ENCODE measurements at regions of chr9 and their contacts with region 1.

Region 1: DNA sequence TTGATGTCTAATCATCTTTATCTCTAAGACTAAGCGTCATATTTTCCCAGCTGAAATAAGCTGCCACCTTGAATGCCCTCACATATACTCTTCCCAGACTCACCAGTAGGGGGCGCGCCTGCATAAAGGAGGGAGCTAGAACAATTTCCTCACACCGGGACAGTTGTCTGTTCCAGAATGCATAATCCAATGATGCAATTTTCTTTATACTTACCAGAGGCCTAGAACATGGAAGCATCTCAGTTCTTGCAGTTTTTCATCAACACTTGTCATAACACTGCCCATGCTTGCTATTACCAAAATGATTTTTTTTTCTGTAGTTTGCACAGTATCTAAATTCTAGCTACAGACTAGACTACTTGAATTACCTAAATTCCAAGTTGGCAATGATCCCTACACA is 203.9 kb downstream of the FRMD3 start:
- DNase-seq: peak; percentile 80
- ATAC-seq: peak; percentile 68
- H3K4me3 Mint-ChIP-seq: no peak overlapping the region
- H3K27ac Mint-ChIP-seq: no peak overlapping the region
- H3K4me1 Mint-ChIP-seq: peaks cover 9% of the 10 kb centered on the region
- H3K27me3 Mint-ChIP-seq: no peaks in the 10 kb centered on the region

Region 2: GRCh38 chr9:83296129-83296528 is 38.2 kb before region 1 on chr9:
- CTCF ChIA-PET with region 1: no interaction called
- POLR2A ChIA-PET with region 1: no interaction called
- DNase-seq: peak; percentile 26
- ATAC-seq: no peak
- H3K4me3 Mint-ChIP-seq: no peak overlapping the region
- H3K27ac Mint-ChIP-seq: no peak overlapping the region
- H3K4me1 Mint-ChIP-seq: no peaks in the 10 kb centered on the region
- H3K27me3 Mint-ChIP-seq: no peaks in the 10 kb centered on the region

Region 3: GRCh38 chr9:83346655-83347420 is 12.5 kb after region 1 on chr9:
- CTCF ChIA-PET with region 1: interaction called, 11 read pairs
- POLR2A ChIA-PET with region 1: no interaction called
- DNase-seq: no peak
- ATAC-seq: no peak
- H3K4me3 Mint-ChIP-seq: no peak overlapping the region
- H3K27ac Mint-ChIP-seq: no peak overlapping the region
- H3K4me1 Mint-ChIP-seq: no peaks in the 10 kb centered on the region
- H3K27me3 Mint-ChIP-seq: no peaks in the 10 kb centered on the region

Region 4: DNA sequence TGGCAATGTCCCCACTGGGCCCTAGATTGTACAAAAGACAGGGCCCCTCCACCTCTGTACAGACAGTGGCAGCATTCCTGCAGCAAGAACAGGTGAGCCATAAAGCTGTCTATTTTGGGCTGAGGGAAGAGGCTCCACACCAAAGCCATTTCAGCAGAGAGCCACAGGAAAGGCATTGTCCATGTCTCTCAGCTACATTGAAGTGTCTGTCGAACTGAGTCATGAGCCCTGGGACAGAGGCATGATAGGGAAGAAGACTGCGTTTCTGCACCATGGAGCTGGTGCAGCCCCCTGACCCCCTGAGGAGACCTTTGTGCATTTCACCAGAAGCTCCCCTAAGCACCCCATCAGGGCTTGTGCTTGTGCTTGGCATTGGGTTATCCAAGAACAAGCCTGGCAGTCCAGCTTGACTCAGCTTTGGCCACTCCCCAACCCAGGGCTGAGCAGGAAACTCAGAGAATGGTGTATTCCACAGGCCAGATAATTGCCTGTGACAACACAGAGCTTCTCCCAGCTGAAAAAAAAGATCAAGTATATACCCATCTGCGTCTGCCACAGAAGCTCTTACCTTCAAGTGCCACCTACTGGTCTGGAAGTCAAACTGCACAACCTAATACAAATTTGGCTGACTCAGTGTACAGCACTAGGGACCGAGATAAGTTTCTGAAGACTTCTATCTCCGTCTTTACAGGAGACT is 209.8 kb after region 1 on chr9:
- CTCF ChIA-PET with region 1: interaction called, 145 read pairs
- POLR2A ChIA-PET with region 1: no interaction called
- DNase-seq: peak; percentile 26
- ATAC-seq: peak; percentile 61
- H3K4me3 Mint-ChIP-seq: no peak overlapping the region
- H3K27ac Mint-ChIP-seq: no peak overlapping the region
- H3K4me1 Mint-ChIP-seq: no peaks in the 10 kb centered on the region
- H3K27me3 Mint-ChIP-seq: peaks cover 22% of the 10 kb centered on the region

Region 5: GRCh38 chr9:83596896-83597504 is 262.7 kb after region 1 on chr9:
- CTCF ChIA-PET with region 1: interaction called, 34 read pairs
- POLR2A ChIA-PET with region 1: no interaction called
- DNase-seq: peak; percentile 65
- ATAC-seq: peak; percentile 51
- H3K4me3 Mint-ChIP-seq: no peak overlapping the region
- H3K27ac Mint-ChIP-seq: no peak overlapping the region
- H3K4me1 Mint-ChIP-seq: no peaks in the 10 kb centered on the region
- H3K27me3 Mint-ChIP-seq: no peaks in the 10 kb centered on the region

Region 6: GRCh38 chr9:83639266-83639665 is 304.9 kb after region 1 on chr9:
- CTCF ChIA-PET with region 1: interaction called, 12 read pairs
- POLR2A ChIA-PET with region 1: no interaction called
- DNase-seq: no peak
- ATAC-seq: no peak
- H3K4me3 Mint-ChIP-seq: no peak overlapping the region
- H3K27ac Mint-ChIP-seq: no peak overlapping the region
- H3K4me1 Mint-ChIP-seq: no peaks in the 10 kb centered on the region
- H3K27me3 Mint-ChIP-seq: no peaks in the 10 kb centered on the region

Region 7: GRCh38 chr9:83649080-83649479 is 314.8 kb after region 1 on chr9:
- CTCF ChIA-PET with region 1: interaction called, 16 read pairs
- POLR2A ChIA-PET with region 1: no interaction called
- DNase-seq: peak; percentile 79
- ATAC-seq: peak; percentile 87
- H3K4me3 Mint-ChIP-seq: no peak overlapping the region
- H3K27ac Mint-ChIP-seq: no peak overlapping the region
- H3K4me1 Mint-ChIP-seq: peaks cover 10% of the 10 kb centered on the region
- H3K27me3 Mint-ChIP-seq: no peaks in the 10 kb centered on the region

Measured in activated CD8-positive, alpha-beta T cell treated with anti-CD3 and anti-CD28 coated beads, Interleukin-2, amount 10 ng/mL, durations not matched to agents 7 days and 5 days (primary cell).